ENCODE measurements at regions of chr5 and their contacts with region 1.

Region 1: DNA sequence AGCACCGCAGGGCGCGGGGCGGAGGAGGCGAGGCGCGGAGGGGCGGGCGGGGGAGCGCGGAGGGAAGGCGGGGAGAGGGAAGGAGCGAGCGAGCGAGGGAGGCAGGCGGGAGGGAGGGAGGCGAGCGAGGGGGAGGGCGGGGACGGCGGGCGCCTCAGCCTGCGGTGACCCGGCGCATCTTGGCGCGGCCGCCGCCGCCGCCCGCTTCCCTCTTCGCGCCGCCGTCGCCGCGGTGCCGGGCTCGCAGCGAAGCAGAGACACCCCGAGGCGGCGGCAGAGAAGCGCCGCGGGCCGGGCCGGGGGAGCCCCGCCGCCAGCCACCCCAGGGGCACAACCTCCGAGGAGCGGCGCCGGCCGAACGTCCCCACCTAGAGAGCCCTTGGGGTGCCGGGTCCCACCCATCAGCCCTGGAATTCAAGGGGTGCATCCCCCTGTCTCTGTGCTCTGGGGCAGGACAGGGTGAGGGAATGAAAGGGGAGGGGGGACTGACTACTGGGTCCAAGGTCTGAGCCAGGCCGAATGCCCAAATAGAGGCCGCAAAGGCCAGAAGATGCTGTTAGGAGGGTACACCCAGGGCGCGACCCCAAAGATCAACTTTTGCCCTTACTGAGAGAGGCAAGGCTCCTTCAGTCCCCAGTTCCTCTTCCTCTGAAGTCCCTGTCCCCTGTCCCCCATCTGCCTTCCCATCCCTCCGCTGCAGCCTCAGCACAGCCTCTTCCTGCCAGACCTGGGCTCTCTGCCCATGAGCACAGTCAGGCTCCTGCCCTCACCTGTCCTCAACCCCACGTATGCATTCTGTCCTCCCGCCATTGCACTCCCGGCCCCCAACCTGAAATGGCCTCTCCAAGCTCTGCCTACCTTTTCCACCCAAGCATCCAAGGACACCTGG is at the start of gene ADAMTS2:
- DNase-seq: peak; percentile 90
- total RNA-seq, gene ADAMTS2: 27.1 to 62.0 TPM

Region 2: DNA sequence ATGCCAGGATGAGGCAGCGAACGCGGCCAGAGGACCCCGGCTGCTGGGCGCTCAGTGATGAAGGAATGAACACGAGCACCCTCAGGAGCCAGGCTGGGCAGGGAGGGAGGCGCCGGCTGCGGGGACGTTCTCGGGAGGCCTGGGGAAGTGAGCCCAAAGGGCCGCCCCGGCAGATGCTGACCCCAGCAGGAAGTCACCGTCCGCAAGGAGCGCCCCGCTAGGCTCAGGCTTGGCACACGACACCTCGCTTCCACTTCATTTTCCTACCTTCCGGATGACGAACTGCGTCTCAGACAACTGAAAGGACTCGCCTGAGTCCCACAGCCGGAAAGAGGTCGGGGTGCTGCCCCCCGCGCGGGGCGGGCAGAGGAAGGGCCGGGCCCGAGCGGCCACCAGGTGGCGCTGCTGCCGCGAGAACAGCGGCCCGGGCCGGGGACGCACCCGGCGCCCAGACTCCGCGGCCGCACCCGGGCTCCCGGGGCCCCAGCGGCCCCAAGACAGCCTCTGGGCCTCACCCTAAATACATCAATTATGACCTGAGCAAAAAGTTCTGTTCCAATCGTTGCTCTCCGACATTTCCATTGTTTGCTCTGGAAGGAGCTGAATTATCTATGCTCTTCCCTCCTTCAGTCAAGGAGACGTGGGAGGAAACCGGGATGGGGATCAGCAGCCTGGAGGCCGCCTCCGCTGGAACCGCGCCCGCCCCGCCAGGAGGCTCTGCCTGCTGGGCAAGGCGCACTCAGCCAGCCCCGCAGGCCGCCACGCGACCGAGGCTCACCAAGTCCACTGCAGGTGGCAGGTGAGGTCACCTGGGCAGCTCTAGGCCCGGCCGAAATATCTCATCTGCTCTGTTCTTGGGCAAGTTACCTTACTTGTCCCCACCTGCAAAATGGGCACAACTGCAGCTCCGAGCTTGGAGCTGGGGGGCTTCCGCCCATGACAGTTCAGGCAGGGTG is 178.5 kb before region 1 on chr5:
- intact Hi-C with region 1: loop called (anchors 1 to 5 kb)
- DNase-seq: peak; percentile 84

Region 3: DNA sequence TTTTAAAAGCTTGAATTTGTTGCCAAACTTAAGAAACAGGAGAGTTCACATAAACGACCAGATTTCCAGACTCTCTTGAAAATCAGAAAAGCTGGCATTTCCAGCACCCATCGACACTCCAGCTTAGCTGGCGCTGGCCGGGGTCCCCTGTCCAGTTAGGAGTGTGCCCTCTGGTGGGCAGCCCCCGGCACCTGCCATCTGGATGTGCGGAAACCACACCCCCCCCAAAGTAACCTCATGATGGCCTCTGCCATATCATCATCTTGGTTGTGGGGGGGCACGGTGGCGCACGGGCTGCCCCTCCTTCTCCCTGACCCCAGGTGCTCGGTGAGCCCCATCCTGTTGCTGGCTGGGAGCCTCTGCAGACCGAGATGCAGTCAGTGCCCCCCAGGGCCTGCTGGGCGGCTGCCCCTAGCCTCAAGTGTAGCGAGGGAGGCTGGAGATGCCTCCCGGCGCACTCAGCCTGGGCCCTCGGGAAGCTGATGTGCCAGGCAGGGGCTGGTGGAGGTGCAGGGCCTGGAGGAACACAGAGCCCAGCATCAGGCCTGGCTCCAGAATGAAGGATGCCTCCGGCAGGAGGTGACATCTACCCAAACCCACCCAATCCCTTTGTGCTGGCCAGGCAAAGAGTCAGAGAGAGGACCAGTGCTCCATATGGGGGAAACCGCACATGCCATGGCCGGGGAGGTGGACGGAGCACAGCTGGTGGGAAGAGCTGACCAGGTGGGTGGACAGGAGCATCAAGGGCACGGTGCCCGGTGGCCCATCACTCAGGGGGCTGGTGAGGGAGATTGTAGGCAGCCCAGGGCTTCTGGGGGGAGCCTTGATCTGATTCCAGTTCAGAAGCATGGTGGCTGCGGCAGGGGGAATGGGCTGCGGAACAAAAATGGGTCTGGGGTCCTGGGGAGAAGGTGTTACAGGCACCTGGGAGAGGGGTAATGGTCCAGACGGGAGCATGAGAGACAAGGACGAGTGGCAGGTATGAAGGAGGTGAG is 71.1 kb before region 1 on chr5:
- intact Hi-C with region 1: loop called in 1 of 2 experiments (anchors 1 kb)
- DNase-seq: peak; percentile 62

Region 4: GRCh38 chr5:179378441-179379271 is 33.0 kb after region 1 on chr5:
- intact Hi-C with region 1: no loop called
- DNase-seq: peak; percentile 28

Region 5: DNA sequence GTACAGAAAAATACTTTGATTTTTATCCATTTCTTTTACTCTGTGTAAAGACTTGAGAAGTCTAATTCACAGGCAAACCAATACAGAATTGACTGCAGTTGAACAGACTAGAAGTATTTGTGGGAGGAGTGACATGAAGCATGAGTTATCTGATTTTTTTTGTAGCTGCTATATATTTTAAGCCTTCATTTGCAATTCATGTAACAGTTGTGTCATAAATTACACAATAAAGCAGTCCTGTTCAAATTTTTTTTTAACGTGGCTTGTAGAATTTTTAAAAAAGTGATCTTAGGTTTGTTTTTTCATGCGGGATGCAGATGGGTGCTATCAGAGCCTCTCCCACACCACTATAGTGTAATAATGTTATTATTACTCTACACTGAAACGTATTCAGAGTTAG is 384.1 kb after region 1 on chr5:
- intact Hi-C with region 1: no loop called
- DNase-seq: no peak